Mammary epithelial cell (primary cell): ENCODE measurements at regions of chr2 and their contacts with region 1.

Region 1: DNA sequence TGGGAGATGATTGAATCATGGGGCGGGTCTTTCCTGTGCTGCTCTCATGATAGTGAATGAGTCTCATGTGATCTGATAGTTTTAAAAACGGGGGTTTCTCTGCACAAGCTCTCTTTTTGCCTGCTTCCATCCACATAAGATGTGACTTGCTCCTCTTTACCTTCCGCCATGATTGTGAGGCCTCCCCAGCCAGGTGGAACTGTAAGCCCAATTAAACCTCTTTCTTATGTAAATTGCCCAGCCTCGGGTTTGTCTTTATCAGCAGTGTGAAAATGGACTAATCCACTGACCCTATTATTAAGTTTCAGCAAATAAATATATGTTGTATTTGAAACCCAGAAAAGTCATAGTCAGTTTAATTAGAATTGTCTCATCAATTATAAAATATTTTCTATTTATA is 22.0 kb downstream of the IRS1 start:
- DNase-seq: no peak
- H3K4me3 ChIP-seq: no peak overlapping the region
- H3K27ac ChIP-seq: no peak overlapping the region
- H3K4me1 ChIP-seq: peaks cover 13% of the 10 kb centered on the region
- H3K27me3 ChIP-seq: no peaks in the 10 kb centered on the region
- CTCF ChIP-seq: no peak

Region 2: DNA sequence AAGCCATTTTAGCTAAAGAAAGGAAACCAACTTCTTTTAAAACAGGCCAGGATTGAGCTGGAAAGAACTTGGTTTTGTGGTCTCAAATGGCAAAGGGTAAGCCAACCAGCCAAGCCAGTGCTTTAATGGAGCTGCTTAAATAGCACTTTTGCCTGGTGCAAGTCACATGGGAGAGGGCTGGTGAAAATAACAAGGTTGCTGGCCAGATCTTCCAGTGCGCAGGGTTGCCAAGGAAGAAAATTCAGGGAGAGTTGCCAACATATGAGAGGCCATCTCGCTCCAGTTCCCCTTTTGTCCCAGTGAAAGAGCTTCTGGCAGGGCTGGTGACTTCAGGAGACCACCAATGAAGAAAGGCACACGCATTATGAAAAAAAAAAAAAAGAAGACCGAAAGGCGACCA is 35.3 kb before region 1 on chr2:
- CTCF ChIA-PET with region 1: no interaction called
- dilution Hi-C with region 1: loop called (anchors 5 kb)
- in situ Hi-C with region 1: no loop called
- intact Hi-C with region 1: no loop called
- DNase-seq: no peak
- H3K4me3 ChIP-seq: no peak overlapping the region
- H3K27ac ChIP-seq: no peak overlapping the region
- H3K4me1 ChIP-seq: peaks cover 5% of the 10 kb centered on the region
- H3K27me3 ChIP-seq: no peaks in the 10 kb centered on the region
- CTCF ChIP-seq: no peak

Region 3: GRCh38 chr2:226752887-226753286 is 24.7 kb before region 1 on chr2:
- CTCF ChIA-PET with region 1: no interaction called
- dilution Hi-C with region 1: no loop called
- in situ Hi-C with region 1: no loop called
- intact Hi-C with region 1: no loop called
- DNase-seq: no peak
- H3K4me3 ChIP-seq: no peak overlapping the region
- H3K27ac ChIP-seq: no peak overlapping the region
- H3K4me1 ChIP-seq: peaks cover 23% of the 10 kb centered on the region
- H3K27me3 ChIP-seq: no peaks in the 10 kb centered on the region
- CTCF ChIP-seq: no peak